HepG2 (cell line): ENCODE measurements at regions of chr19 and their contacts with region 1.

Region 1: GRCh38 chr19:45439569-45440254 is 16.0 kb upstream of the ERCC1 start:
- DNase-seq: no peak
- ATAC-seq: peak; percentile 35
- H3K4me3 ChIP-seq: peak overlapping the region; percentile 68 to 84 (median 77); a peak in 5 of 6 replicates
- H3K27ac ChIP-seq: peak overlapping the region; percentile 62
- H3K4me1 ChIP-seq: peaks cover 52% of the 10 kb centered on the region
- H3K27me3 ChIP-seq: no peaks in the 10 kb centered on the region
- CTCF ChIP-seq: peak; percentile 75
- EP300 ChIP-seq: no peak
- POLR2A ChIP-seq: no peak
- RAD21 ChIP-seq: peak; percentile 98

Region 2: DNA sequence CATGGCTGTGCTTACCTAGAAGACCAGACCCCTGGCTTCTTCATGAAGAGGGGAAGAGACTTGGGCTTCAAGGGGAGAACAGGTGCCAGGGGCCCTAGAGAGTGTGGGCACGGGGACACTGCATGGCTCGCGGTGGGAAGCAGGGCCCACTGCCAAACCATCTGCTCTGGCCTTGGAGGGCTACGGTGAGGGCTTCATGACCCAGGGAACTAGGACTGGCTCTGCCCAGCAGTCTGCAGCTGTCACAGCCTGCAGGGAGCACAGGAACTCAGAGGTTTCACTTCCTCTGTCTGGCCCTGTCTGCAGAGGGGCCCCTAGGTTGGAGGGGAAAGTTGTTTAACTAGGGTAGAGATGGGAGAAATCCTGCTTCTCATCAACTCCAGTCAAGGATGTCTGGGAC is 20.3 kb before region 1 on chr19:
- CTCF ChIA-PET with region 1: no interaction called
- POLR2A ChIA-PET with region 1: no interaction called
- in situ Hi-C with region 1: no loop called
- intact Hi-C with region 1: no loop called
- DNase-seq: no peak
- ATAC-seq: no peak
- H3K4me3 ChIP-seq: no peak overlapping the region
- H3K27ac ChIP-seq: no peak overlapping the region
- H3K4me1 ChIP-seq: peaks cover 14% of the 10 kb centered on the region
- H3K27me3 ChIP-seq: no peaks in the 10 kb centered on the region; a peak in 1 of 5 replicates
- CTCF ChIP-seq: no peak
- EP300 ChIP-seq: no peak
- POLR2A ChIP-seq: no peak
- RAD21 ChIP-seq: no peak

Region 3: DNA sequence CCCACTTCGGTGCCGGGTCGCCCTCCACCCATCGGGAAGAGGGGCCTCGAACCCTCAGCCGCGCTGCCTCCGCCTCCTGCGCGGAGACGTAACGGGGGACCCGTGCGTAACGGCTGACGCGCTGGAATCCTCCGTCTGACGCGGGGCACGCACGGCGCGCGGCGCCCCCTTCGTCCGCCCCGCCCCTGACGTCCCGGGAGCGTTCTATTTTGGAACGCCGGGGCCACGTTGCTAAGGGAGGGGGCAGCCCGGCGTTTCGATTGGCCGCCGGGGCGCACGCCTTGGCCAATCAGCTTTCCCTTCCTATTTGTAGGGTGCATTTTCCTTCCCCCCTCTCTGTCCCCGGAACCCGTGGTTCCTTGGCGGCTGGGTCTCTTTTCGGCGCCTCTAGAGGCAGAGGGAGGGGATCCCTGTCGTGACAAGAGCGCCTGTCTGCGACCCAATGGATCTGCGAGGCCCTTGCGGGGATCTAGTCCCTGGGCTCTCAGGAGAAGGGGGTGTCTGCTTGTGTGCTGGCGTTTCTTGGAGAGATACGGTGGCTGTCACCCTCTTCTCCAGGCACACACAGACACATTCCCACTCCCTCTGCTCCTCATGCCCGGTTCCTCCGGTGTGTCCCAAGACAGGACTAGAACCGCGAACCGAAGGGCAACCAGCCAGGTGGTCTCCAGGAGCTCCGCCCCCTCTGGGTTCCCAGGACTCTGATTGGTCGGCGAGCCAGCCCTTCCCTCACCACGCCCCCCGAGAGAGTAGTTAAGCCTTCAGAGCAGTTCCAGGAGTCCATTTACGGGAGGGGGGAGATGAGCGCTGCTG is 29.6 kb after region 1 on chr19:
- CTCF ChIA-PET with region 1: no interaction called
- POLR2A ChIA-PET with region 1: interaction called, 40 read pairs
- in situ Hi-C with region 1: no loop called
- intact Hi-C with region 1: no loop called
- DNase-seq: peak; percentile 87
- ATAC-seq: peak; percentile 76
- H3K4me3 ChIP-seq: peak overlapping the region; percentile 76 to 91 (median 89)
- H3K27ac ChIP-seq: peak overlapping the region; percentile 96
- H3K4me1 ChIP-seq: peaks cover 28% of the 10 kb centered on the region
- H3K27me3 ChIP-seq: peaks cover 0 to 3% of the 10 kb centered on the region in 2 experiments; a peak in 2 of 5 replicates
- CTCF ChIP-seq: peak; percentile 41; the same call in 1 of the 2 replicates
- EP300 ChIP-seq: no peak
- POLR2A ChIP-seq: peak; percentile 64 to 91
- RAD21 ChIP-seq: 0 out of 2 replicates have a peak, but pooled peaks have one; percentile 13

Region 4: GRCh38 chr19:45478454-45479238 is 38.9 kb after region 1 on chr19:
- CTCF ChIA-PET with region 1: interaction called, 117 read pairs
- POLR2A ChIA-PET with region 1: interaction called, 20 read pairs
- in situ Hi-C with region 1: loop called (anchors 5 kb)
- intact Hi-C with region 1: loop called (anchors 1 kb)
- DNase-seq: peak; percentile 91
- ATAC-seq: peak; percentile 88
- H3K4me3 ChIP-seq: peak overlapping the region; percentile 60 to 70 (median 66)
- H3K27ac ChIP-seq: peak overlapping the region; percentile 90
- H3K4me1 ChIP-seq: peaks cover 36% of the 10 kb centered on the region
- H3K27me3 ChIP-seq: peaks cover 0 to 16% of the 10 kb centered on the region in 2 experiments; a peak in 2 of 5 replicates
- CTCF ChIP-seq: peak; percentile 93
- EP300 ChIP-seq: peak in 1 of 2 experiments; percentile 13; a peak in 1 of 4 replicates
- POLR2A ChIP-seq: 0 out of 4 replicates have a peak, but pooled peaks of 1 of the 2 experiments have one; percentile 38
- RAD21 ChIP-seq: peak; percentile 92

Region 5: DNA sequence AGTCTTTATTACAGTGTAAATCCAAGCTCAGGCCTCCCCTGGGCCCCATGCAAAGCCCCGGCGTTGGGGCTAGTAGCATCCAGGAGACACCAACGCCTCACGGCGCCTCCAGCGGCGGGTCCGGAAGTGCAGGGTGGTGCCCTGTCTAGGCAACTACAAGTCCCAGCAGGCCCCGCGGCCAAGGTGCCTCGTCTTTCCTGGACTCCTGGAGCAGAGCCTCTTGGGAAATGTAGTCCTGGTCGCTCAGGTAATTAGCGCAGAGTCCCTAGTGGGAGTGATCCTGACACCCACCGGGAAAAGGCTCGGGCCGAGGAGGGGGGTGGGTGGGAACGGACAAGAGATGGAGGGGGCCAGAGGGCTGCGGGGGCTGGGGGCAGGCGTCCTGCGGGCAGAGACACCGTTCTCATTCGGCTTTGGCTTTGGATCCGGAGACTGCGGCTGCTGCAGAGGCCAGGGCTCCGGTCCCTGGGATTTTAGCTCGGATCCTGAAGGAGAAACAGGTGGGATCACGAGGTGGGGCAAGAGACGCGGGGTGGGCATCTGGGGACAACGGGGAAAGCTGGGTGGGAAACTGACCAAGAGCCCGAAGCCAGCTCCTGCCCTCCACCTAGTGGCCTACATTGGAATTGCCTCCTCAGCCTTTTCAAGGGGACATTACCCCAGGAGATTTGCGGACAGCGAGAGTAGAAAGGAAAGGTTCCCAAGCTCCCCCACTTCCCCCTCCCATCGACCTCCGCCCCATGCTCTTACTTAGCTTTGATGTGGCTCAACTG is 45.8 kb after region 1 on chr19:
- CTCF ChIA-PET with region 1: interaction called, 21 read pairs
- POLR2A ChIA-PET with region 1: interaction called, 8 read pairs
- in situ Hi-C with region 1: no loop called
- intact Hi-C with region 1: no loop called
- DNase-seq: peak; percentile 93
- ATAC-seq: peak; percentile 97
- H3K4me3 ChIP-seq: peak overlapping the region; percentile 66 to 88 (median 76)
- H3K27ac ChIP-seq: peak overlapping the region; percentile 36
- H3K4me1 ChIP-seq: peaks cover 25% of the 10 kb centered on the region
- H3K27me3 ChIP-seq: peaks cover 0 to 6% of the 10 kb centered on the region in 2 experiments; a peak in 2 of 5 replicates
- CTCF ChIP-seq: peak; percentile 89
- EP300 ChIP-seq: peak in 1 of 2 experiments; percentile 4; a peak in 1 of 4 replicates
- POLR2A ChIP-seq: no peak
- RAD21 ChIP-seq: peak; percentile 29; the same call in 1 of the 2 replicates

Region 6: GRCh38 chr19:45809643-45810159 is 370.0 kb after region 1 on chr19:
- CTCF ChIA-PET with region 1: no interaction called
- POLR2A ChIA-PET with region 1: no interaction called
- in situ Hi-C with region 1: no loop called
- intact Hi-C with region 1: no loop called
- DNase-seq: no peak
- ATAC-seq: peak; percentile 34; the same call in 1 of the 3 replicates
- H3K4me3 ChIP-seq: no peak overlapping the region
- H3K27ac ChIP-seq: no peak overlapping the region
- H3K4me1 ChIP-seq: peaks cover 8% of the 10 kb centered on the region
- H3K27me3 ChIP-seq: peaks cover 0 to 4% of the 10 kb centered on the region in 2 experiments; a peak in 2 of 5 replicates
- CTCF ChIP-seq: no peak
- EP300 ChIP-seq: no peak
- POLR2A ChIP-seq: no peak
- RAD21 ChIP-seq: no peak